Calu3 (cell line): ENCODE measurements at regions of chr6 and their contacts with region 1.

Region 1: DNA sequence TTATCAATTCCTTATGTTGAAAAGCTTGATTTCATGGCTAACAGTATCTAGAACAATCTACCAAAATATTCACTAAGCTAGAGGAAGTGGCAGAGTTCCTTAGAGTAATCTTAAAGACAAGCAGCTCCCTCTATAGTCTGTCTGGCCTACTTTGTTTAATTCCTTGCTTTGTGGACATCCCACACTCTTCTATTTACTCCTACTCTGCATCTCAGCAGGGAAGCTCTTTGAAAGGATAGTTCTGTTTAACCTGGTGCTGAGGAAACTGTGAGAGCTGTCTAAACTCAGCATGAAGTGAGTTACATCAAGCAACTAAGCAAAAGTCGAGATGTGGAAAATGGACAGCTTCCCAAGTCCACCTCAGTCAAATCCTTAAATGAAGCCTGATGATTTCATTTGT is 4.3 kb downstream of the REV3L start:
- DNase-seq: no peak
- H3K4me3 Mint-ChIP-seq: no peak overlapping the region
- H3K27ac Mint-ChIP-seq: no peak overlapping the region
- H3K4me1 Mint-ChIP-seq: peaks cover 24% of the 10 kb centered on the region
- H3K27me3 Mint-ChIP-seq: no peaks in the 10 kb centered on the region
- CTCF ChIP-seq: no peak

Region 2: DNA sequence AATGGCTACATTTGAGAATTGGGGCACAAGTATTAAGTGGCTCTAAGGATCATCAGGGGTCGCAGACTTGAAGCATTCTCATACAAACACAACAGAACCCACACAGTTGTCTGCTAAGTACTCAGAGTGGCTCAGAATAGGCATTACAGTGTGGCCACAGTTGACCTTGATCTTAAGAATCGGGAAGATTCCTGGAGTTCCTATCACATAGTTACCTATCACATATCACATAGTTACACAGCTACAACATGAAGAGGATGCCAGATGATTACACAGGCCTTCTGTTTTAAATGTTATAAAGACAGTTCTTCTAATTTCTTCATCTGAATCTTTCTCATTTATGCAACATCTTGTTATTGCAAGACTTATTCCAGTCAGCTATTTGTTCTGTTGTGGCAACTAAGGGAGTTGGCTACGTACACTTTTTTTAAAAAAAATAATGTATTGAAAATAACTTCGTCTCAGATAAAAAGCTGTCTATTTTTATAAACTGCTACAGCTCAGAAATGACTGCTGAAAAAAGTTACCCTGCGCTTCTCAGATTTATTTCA is 124.8 kb before region 1 on chr6:
- CTCF ChIA-PET with region 1: no interaction called
- intact Hi-C with region 1: loop called (anchors 2 kb)
- DNase-seq: no peak
- H3K4me3 Mint-ChIP-seq: no peak overlapping the region
- H3K27ac Mint-ChIP-seq: no peak overlapping the region
- H3K4me1 Mint-ChIP-seq: peaks cover 31% of the 10 kb centered on the region
- H3K27me3 Mint-ChIP-seq: no peaks in the 10 kb centered on the region
- CTCF ChIP-seq: no peak

Region 3: DNA sequence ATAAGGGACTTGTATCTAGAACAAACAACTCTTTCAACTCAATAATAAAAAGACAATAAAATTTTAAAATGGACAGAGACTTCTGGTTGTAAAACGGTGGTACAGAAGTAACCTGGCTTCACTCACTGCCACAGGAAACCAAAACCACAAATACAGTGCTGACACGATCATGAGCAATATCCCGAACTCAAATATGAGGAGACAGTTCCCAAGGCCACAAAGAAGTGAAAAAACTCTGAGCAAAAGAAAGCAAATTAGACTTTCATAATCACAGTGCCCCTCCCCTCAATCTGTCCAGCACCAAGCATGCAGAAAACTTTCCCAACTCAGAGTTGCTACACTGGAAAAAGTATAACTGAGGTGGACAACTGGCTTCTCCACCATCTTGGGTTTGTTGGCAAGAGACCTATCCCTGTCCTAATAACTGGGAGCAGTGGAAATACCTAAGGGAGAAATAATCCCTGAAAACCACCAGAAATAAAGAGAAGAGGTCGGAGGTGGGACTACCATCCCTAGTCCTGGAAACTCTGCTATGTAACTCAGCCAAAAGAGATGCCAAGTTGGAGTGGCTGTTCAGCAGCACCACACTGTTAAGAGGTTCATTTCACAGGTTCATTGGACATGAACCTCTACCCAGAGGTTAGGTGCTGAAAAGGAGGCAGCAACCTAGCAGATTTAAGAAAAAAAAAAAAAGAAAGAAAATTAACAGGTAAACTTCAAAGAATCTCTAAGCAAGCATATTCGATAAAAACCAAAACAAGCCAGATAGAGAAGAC is 51.2 kb before region 1 on chr6:
- CTCF ChIA-PET with region 1: interaction called, 3 read pairs
- intact Hi-C with region 1: loop called (anchors 5 kb)
- DNase-seq: peak; percentile 14
- H3K4me3 Mint-ChIP-seq: peak overlapping the region; percentile 38
- H3K27ac Mint-ChIP-seq: peak overlapping the region; percentile 48
- H3K4me1 Mint-ChIP-seq: peaks cover 36% of the 10 kb centered on the region
- H3K27me3 Mint-ChIP-seq: no peaks in the 10 kb centered on the region
- CTCF ChIP-seq: no peak

Region 4: GRCh38 chr6:111456208-111456607 is 22.5 kb before region 1 on chr6:
- CTCF ChIA-PET with region 1: no interaction called
- intact Hi-C with region 1: no loop called
- DNase-seq: no peak
- H3K4me3 Mint-ChIP-seq: no peak overlapping the region
- H3K27ac Mint-ChIP-seq: no peak overlapping the region
- H3K4me1 Mint-ChIP-seq: no peaks in the 10 kb centered on the region
- H3K27me3 Mint-ChIP-seq: no peaks in the 10 kb centered on the region
- CTCF ChIP-seq: no peak

Region 5: DNA sequence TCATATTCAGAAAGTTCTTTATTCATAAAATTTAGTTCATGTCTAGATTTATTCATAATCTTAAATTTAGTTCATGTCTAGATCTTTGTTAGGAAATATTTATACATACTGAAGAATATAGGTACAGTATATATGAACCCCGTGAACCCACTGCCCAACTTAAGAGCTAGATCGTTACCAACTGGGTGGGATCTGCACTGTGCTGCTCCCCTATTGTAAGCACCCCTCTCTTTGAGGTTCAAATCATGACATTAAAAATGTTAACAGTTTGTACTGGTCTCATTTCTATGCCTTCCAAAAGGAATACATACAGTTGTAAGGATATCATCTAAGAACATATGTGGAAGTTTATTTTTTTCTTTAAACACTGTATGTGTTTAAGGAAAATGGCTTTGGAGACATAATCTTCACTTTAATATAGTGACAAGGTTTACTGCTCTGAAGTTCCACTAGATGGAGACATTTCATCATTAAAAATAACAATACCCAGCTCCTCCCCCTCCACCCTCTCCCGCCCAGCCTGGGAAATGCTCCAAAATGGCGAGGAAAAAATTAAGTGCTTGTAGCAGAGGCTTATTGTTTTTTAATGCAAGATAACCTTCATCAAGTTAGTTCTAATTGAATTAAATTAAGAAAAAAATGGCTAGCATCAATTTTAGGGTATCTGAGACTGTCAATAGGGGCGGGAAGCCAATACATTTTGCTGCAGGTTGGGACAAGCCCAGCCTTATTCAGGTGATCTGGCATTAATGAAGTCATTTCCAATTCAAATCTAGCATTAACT is 231.1 kb after region 1 on chr6:
- CTCF ChIA-PET with region 1: no interaction called
- intact Hi-C with region 1: no loop called
- DNase-seq: peak; percentile 59
- H3K4me3 Mint-ChIP-seq: no peak overlapping the region
- H3K27ac Mint-ChIP-seq: no peak overlapping the region
- H3K4me1 Mint-ChIP-seq: peaks cover 15% of the 10 kb centered on the region
- H3K27me3 Mint-ChIP-seq: no peaks in the 10 kb centered on the region
- CTCF ChIP-seq: peak; percentile 75